ENCODE measurements at regions of chr19 and their contacts with region 1.

Region 1: DNA sequence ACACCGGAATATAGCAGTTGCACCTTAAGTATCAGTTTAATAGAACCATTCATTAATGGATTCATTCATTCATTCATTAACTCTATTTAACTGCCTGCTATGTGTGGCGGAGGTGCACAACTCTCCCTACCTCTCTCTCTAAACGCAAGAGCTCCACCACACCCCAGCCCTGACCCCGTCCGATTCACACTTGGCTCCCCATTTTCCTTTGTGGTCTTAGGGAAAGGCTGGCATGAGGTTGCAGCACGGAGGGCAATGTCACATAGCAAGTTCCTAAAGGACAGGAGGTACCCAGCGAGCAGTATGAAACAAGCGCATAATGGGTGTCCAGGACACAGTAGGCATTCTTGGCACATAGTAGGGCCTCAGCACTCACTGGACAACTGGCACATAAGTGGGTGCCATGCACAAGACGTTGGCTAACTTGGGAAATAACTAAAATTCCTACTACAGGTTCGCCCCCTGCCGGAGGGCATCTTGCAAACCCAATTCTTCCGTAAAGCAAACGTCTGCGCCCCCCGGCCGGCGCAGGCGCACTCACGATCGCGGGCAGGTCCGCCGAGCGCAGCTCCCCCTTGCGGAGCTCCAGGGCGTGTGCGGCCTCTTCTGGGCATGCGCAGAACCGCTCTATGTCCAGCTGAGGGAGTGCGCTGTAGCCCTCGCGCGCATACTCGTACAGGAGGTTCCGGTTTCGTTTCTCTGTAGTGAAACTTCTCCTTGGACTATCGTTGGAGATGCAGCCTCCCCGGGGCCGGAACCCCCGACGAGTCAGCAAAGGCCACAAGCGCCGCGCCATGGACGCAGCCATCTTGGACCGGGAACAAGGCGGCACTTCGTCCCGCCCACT is at the start of gene SARS2:
- DNase-seq: peak; percentile 97
- CTCF ChIP-seq: peak; percentile 95

Region 2: DNA sequence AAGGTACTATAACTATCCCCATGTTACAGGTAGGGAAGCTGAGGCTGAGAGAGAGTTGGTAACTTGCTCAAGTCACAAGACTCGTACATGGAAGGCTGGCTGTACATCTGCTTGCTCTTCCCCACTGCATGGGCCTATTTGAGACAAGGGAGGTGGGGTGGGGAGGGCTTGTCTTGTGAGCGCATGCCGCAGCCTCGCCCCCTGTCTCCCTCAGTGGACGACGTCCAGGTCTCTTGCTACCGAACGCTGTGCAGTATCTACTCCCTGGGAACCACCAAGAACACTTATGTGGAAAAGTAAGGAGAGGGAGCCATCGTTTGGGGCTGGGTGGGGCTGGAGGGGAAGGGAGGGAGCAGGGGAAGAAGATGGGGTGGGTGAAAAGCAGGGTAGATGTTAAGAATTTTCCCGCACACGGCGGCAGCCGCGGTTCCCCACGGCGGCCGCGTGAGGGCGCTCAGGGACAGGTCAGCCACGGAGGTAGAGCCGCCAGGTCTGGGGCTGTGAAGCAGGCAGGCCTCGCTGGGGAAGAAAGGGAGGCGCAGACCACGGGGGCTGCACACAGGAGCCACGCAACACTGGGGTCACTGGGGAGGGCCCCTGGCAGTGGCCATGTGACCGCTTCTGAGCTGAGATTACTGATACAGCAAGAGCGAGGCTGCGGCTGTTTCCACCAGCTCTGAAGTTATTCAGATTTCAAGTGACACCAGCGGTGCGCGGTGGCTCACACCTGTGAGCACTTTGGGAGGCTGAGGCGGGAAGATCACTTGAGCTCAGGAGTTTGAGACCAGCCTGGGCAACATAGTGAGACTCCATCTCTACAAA is 415.1 kb before region 1 on chr19:
- CTCF ChIA-PET with region 1: interaction called, 12 read pairs
- POLR2A ChIA-PET with region 1: no interaction called
- DNase-seq: peak; percentile 90
- CTCF ChIP-seq: peak; percentile 91

Region 3: GRCh38 chr19:38734426-38735256 is 195.5 kb before region 1 on chr19:
- CTCF ChIA-PET with region 1: interaction called, 17 read pairs
- POLR2A ChIA-PET with region 1: no interaction called
- DNase-seq: peak; percentile 63
- CTCF ChIP-seq: no peak

Region 4: GRCh38 chr19:38877781-38878574 is 52.2 kb before region 1 on chr19 and contains the start of gene RINL:
- CTCF ChIA-PET with region 1: interaction called, 13 read pairs
- POLR2A ChIA-PET with region 1: no interaction called
- DNase-seq: peak; percentile 85
- CTCF ChIP-seq: no peak

Region 5: DNA sequence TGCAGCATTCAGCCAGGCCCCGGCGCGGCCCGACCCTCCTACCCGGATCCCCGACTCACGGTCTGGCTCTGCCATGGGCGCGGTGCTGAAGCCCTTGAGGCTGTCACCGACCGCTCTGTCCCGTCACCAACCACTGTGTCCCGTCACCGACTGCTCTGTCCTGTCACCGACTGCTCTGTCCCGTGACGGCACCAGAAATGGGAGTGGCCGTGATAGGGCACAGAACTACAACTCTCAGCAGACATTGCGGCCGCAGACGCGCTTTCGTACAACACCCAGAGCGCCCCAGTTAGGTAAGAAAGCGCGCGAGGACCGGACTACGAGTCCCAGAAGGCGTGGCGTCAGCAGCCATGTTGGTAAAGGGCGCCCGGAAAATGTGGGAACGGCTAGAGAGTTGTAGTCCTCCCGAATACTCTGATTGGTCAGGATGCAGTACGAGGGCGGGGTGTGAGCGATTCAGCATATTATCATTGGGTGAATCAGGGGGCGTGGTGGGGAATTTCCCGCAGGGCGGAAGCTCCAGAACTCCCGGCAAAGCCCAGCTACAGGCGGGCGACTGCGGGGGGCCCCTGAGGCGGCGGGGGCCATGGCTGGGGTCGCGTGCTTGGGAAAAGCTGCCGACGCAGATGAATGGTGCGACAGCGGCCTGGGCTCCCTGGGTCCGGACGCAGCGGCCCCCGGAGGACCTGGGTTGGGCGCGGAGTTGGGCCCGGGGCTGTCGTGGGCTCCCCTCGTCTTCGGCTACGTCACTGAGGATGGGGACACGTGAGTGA is 30.5 kb before region 1 on chr19 and contains the starts of genes NFKBIB and SIRT2:
- CTCF ChIA-PET with region 1: interaction called, 18 read pairs
- POLR2A ChIA-PET with region 1: no interaction called
- DNase-seq: peak; percentile 99
- CTCF ChIP-seq: no peak

Region 6: GRCh38 chr19:38917516-38918491 is 12.3 kb before region 1 on chr19:
- CTCF ChIA-PET with region 1: interaction called, 31 read pairs
- POLR2A ChIA-PET with region 1: no interaction called
- DNase-seq: no peak
- CTCF ChIP-seq: no peak

Region 7: GRCh38 chr19:38952395-38953165 is 22.4 kb after region 1 on chr19:
- CTCF ChIA-PET with region 1: interaction called, 26 read pairs
- POLR2A ChIA-PET with region 1: no interaction called
- DNase-seq: peak; percentile 72
- CTCF ChIP-seq: peak; percentile 70

Region 8: DNA sequence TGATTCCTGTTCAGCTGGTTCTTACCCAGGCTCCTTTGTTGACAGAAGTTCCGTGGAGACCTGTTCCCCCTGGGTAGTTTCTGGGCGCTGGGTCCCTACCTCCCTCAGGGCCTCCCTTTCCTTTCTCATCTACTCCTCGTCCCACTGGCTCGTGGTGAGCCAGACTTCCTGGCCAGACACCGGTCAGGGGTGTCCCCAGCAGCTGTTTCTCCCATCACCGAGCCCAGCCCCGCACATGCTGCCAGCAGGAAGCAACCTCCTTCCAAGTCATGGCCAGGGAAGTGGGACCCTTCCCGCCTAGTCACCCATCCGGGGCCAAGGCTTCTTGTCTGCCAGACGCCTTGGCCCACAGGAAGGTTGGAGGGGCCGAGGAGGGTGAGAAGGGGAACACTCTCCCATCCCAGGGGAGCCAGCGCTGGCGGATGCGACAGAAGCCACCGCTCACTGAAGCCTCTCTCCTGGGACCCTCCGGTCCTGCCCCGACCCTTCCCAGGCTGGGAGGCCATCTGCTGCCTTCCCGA is 201.1 kb after region 1 on chr19:
- CTCF ChIA-PET with region 1: no interaction called
- POLR2A ChIA-PET with region 1: no interaction called
- DNase-seq: no peak
- CTCF ChIP-seq: no peak

Measured in GM10248 (cell line).